Dendritic cell treated with granulocyte-macrophage colony-stimulating factor and Interleukin-4, amounts not matched to agents 40 ng/mL and 50 ng/mL, for 4 days (primary cell): ENCODE measurements at regions of chr1 and their contacts with region 1.

Region 1: DNA sequence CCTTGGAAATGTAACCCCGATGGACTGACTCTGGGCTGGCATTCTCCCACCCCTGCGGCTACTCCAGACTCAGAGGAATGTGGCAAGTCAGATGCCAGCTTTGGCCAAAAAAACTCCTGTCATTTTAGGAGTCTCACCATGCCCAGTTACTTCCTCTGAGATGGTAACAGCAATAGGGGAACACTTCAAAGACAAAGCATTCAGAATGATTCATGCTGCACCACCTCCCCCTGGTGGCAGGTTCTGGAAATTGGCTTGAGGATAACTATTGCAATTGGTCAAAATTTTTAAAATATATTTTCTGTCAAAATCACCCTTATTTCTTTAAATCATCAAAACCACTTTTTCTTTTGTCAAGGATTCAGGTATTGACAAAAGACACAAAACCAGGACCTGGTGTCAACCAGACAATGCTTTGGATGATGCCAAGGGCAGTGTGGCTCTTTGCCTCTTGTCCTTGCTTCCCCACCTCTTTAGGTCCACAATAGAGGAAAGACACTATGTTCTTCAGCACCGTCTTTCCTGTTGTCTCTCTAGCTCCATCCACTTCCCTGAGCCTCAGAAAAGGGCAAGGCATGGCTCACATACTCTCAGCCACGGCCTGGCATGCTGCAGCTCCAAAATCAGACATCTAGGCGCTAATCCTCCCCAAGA is 9.9 kb upstream of the CDCA8 start:
- H3K4me3 Mint-ChIP-seq: no peak overlapping the region
- H3K27ac Mint-ChIP-seq: peak overlapping the region; percentile 27
- H3K4me1 Mint-ChIP-seq: no peaks in the 10 kb centered on the region
- H3K27me3 Mint-ChIP-seq: no peaks in the 10 kb centered on the region

Region 2: DNA sequence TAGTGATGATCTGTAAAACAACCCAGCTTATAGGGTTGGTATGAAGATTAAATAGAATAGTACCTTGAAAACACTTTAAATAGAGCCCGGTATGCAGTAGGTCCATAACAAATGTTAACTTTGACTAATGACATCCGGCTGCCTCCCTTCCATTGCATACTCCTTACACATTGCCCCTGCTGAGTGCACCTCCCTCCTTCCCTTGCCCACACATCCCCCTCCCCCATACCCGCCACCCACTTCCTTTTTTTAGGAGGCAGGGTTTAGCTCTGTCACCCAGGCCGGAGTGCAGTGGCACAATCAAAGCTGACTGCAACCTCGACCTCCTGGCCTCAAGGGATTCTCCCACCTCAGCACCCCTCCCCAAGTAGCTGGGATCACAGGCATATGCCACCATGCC is 232.5 kb before region 1 on chr1:
- intact Hi-C with region 1: loop called (anchors 5 kb)
- H3K4me3 Mint-ChIP-seq: no peak overlapping the region
- H3K27ac Mint-ChIP-seq: peak overlapping the region; percentile 63
- H3K4me1 Mint-ChIP-seq: peaks cover 29% of the 10 kb centered on the region
- H3K27me3 Mint-ChIP-seq: peaks cover 5% of the 10 kb centered on the region

Region 3: DNA sequence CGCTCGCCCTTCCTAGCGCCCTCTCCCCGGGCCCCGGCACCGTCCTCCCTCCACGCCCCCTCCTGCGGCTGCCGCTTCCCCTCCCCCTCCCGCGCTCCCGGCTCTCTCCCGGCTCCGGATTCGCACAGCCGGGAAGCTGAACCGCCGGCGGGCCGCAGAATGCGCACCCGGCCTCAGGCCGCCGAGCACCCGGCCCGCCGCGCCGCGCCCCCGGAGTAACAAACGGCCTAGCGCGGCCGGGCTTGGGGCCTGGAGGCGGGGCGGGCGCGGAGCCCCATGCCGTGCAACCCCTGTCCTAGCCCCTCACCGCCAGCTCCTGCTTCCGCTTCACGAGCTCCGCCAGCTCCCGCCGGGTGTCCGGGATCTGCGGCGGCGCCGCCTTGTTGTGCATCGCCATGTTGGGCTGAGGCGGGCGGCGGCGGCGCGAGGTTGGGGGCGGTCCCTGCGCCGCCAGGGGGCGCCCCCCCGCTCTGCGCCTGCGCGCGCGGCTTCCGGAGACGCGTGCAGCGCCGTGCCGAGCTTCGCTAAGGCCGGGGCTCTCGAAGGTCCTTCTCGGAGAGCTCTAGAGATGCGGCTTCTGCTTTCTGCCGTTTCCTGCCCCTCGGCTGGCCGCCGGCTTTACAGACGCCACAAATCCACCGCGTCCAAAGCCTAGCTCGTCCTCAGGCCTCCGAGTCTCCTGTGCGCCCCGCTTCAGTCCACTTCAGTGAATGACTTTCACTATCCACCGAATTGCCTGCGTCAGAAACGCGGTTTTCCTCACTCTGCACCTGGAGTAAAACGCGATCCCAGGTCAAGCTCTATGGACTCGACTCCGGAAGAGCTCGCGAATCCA is 167.9 kb before region 1 on chr1 and contains the start of gene MEAF6:
- intact Hi-C with region 1: loop called (anchors 2 kb)
- H3K4me3 Mint-ChIP-seq: peak within 1 kb of the TSS; percentile 96
- H3K27ac Mint-ChIP-seq: peak within 1 kb of the TSS; percentile 98
- H3K4me1 Mint-ChIP-seq: peaks cover 40% of the 10 kb centered on the region
- H3K27me3 Mint-ChIP-seq: no peaks in the 10 kb centered on the region

Region 4: GRCh38 chr1:37537378-37537777 is 145.1 kb before region 1 on chr1:
- intact Hi-C with region 1: no loop called
- H3K4me3 Mint-ChIP-seq: no peak overlapping the region
- H3K27ac Mint-ChIP-seq: no peak overlapping the region
- H3K4me1 Mint-ChIP-seq: peaks cover 12% of the 10 kb centered on the region
- H3K27me3 Mint-ChIP-seq: no peaks in the 10 kb centered on the region

Region 5: GRCh38 chr1:37602750-37603694 is 79.4 kb before region 1 on chr1:
- intact Hi-C with region 1: loop called (anchors 1 kb)
- H3K4me3 Mint-ChIP-seq: no peak overlapping the region
- H3K27ac Mint-ChIP-seq: no peak overlapping the region
- H3K4me1 Mint-ChIP-seq: peaks cover 6% of the 10 kb centered on the region
- H3K27me3 Mint-ChIP-seq: peaks cover 13% of the 10 kb centered on the region

Region 6: DNA sequence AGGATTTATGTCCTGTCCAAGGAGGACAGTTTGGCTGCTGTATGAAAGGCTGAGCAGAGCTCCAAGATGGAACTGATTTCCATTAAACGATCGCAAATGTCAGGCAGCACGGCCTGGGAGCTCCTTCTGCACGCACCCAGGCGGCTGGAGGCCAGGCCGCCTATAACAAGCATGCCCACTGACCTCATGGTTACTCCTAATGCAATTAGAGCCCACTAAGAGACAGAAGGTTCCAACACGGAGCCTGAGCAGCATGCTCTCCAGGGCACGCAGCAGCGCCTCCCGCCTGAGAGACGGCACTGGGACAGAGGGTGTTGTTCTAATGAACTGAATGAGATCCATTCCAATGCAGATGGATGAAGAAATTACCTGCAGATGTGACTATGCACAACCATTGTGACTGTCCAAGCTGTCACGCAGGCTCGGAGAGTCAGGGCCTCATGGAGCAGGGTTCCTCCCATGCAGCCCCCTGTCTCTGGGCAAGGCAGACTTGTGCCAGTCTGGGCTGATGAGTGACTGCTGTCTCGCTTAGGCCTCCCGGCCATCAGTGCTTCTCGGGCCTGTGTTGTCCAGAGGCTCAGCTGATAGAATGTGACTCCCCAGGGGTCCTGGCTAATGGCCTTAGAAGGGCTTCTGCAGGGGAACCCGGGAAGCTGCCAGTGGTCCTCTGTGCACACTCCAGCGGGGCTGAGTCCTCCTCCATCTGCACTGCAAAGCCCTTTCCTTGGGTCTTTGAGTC is 15.3 kb before region 1 on chr1:
- intact Hi-C with region 1: no loop called
- H3K4me3 Mint-ChIP-seq: no peak overlapping the region
- H3K27ac Mint-ChIP-seq: no peak overlapping the region
- H3K4me1 Mint-ChIP-seq: no peaks in the 10 kb centered on the region
- H3K27me3 Mint-ChIP-seq: peaks cover 3% of the 10 kb centered on the region

Region 7: GRCh38 chr1:37752583-37753471 is 70.4 kb after region 1 on chr1:
- intact Hi-C with region 1: no loop called
- H3K4me3 Mint-ChIP-seq: peak overlapping the region; percentile 55
- H3K27ac Mint-ChIP-seq: no peak overlapping the region
- H3K4me1 Mint-ChIP-seq: no peaks in the 10 kb centered on the region
- H3K27me3 Mint-ChIP-seq: peaks cover 69% of the 10 kb centered on the region